Activated T-helper 2 cell treated with anti-CD3 and anti-CD28 coated beads, Interferon-gamma antibody, Interleukin-2, Interleukin-4, amounts not matched to agents 10 μg/mL and 5 μg/mL and 100 μg/mL, durations not matched to agents 14 hours and 24 hours and 36 hours (primary cell): ENCODE measurements at regions of chr3 and their contacts with region 1.

Region 1: DNA sequence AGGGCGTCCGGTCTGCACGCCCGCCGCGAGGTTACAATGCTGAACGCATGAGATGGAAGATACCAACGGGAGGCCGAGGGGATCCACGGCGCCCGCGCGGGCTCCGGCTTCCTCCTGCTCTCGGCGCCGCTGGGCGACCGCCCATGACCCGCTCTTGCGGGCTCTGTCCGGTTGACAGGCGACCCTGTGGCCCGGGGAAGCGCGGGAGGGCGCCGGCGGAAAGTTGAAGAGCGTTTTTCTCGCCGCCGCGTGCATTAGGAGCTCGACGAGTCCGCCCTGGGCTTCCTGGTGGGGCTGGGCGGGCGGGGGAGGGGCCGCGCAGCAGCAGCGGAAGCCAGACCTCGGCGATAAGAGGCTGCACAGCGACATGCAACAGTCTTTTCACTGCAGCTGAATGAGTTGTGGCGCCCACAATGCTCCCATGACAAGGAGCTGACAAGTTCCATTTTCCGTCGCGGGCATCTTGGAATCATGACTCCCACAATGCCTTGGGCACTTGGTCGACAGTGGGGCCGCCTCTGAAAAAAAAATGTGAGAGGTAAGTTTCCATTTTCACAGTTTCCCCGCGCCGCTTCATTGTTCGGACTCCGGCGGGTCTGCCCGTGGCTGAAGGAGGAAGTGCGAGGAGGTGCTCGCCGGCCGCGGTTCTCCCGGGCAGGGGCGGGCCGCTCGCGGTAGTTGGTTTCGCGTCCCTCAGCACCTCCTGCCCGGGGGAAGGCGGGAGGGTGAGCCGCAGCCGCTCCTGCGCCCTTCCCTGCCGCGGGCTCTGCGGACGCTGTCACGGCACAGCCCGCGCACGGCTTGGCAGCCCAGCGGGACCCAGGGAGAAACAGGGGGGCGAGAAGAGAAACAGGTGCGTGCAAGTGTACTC is at the start of gene MBNL1:
- DNase-seq: peak; percentile 82
- H3K4me3 Mint-ChIP-seq: peak within 1 kb of the TSS; percentile 94
- H3K27ac Mint-ChIP-seq: peak within 1 kb of the TSS; percentile 96
- H3K4me1 Mint-ChIP-seq: peaks cover 54% of the 10 kb centered on the region
- H3K27me3 Mint-ChIP-seq: no peaks in the 10 kb centered on the region
- total RNA-seq, gene MBNL1: 230 and 244 TPM in 2 replicates

Region 2: GRCh38 chr3:151203051-151203420 is 1065.8 kb before region 1 on chr3 and contains the start of gene GPR171:
- intact Hi-C with region 1: loop called (anchors 5 kb)
- DNase-seq: peak; percentile 70
- H3K4me3 Mint-ChIP-seq: peak within 1 kb of the TSS; percentile 91
- H3K27ac Mint-ChIP-seq: peak within 1 kb of the TSS; percentile 95
- H3K4me1 Mint-ChIP-seq: peaks cover 52% of the 10 kb centered on the region
- H3K27me3 Mint-ChIP-seq: no peaks in the 10 kb centered on the region
- total RNA-seq, gene GPR171: 232 TPM in 2 replicates

Region 3: DNA sequence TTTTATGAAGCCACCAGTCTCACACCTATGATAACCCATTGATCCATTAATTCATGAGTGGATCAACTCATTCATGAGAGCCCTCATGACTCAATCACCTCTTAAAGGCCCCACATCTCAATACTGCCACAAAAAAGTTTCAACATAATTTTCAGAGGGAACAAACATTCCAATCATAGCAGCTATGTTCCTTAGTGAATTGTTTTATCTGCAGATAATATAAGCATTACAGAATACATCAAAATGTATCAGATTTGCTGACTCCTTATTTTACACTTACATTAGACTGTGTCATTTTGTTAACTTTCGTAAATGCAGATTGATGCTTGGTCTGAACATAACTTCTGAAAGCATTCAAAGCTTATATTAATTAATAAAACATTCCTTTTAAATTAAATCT is 155.4 kb before region 1 on chr3:
- intact Hi-C with region 1: no loop called
- DNase-seq: no peak
- H3K4me3 Mint-ChIP-seq: no peak overlapping the region
- H3K27ac Mint-ChIP-seq: no peak overlapping the region
- H3K4me1 Mint-ChIP-seq: no peaks in the 10 kb centered on the region
- H3K27me3 Mint-ChIP-seq: peaks cover 50% of the 10 kb centered on the region

Region 4: DNA sequence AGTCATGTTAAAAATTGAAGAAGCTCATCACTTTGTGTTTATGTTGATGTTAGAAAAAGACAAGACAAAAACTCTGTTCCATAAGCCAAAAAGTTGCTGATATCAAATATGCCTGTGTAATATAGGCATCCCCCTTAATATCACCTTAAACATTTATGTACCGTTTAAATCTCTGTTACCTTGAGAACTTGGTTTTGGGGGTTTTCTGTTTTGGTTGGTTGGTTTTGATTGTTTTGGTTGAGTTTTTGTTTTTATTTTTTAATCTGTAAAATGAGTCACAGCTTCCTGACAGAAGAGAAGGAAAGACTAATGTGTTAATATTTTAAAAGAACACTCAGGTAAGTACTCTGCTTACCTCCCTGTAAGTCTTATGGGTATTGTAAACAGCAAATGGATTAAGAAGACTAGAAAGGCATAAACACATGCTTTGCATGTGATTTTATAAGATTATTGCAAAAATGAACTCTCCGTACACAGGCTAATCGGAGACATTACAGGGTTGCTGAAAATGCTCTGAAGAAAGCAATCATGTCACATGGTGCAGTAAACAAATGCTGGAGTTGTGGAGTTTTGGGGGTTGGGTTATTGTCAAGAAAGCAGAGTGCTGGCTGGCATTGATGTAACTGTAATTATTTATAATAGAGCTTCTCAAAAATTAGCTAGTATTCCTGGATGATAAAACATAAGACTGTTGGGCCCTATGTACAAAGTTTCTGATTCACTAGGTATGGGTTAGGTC is 69.5 kb before region 1 on chr3:
- intact Hi-C with region 1: loop called (anchors 1 kb)
- DNase-seq: no peak
- H3K4me3 Mint-ChIP-seq: peak overlapping the region; percentile 74
- H3K27ac Mint-ChIP-seq: peak overlapping the region; percentile 98
- H3K4me1 Mint-ChIP-seq: peaks cover 73% of the 10 kb centered on the region
- H3K27me3 Mint-ChIP-seq: no peaks in the 10 kb centered on the region

Region 5: GRCh38 chr3:152241142-152242017 is 27.4 kb before region 1 on chr3:
- intact Hi-C with region 1: loop called (anchors 1 kb)
- DNase-seq: no peak
- H3K4me3 Mint-ChIP-seq: peak overlapping the region; percentile 66
- H3K27ac Mint-ChIP-seq: peak overlapping the region; percentile 77
- H3K4me1 Mint-ChIP-seq: peaks cover 54% of the 10 kb centered on the region
- H3K27me3 Mint-ChIP-seq: no peaks in the 10 kb centered on the region

Region 6: DNA sequence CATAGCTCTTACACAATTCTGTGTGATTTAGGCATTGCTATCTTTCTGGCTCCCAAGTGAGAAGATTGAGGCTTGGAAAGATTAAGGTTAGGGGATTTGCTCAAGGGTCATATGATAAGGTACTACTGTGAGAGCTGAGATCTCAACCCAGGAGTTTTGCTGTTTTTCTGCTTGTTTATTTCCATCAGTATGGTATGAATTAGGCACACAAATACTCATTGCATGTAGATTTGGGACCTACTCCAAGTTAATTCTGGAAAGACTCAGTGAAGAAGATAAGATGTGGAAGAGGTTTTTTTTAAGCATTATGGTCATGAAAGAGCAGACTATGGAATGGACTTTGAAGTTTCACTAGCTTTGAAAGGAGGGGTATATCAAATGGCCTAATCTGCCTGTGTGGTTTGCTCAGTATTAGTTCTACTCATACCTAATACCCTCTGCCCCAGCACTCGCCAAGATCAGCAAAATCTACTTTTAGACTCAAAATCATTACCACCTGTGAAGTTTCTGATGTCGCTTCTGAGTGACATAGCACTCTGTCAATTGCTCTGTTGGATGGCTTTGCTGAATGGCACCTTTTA is 12.4 kb after region 1 on chr3:
- intact Hi-C with region 1: loop called (anchors 1 kb)
- DNase-seq: no peak
- H3K4me3 Mint-ChIP-seq: no peak overlapping the region
- H3K27ac Mint-ChIP-seq: peak overlapping the region; percentile 78
- H3K4me1 Mint-ChIP-seq: peaks cover 71% of the 10 kb centered on the region
- H3K27me3 Mint-ChIP-seq: no peaks in the 10 kb centered on the region

Region 7: GRCh38 chr3:152319831-152320617 is 51.2 kb after region 1 on chr3:
- intact Hi-C with region 1: no loop called
- DNase-seq: no peak
- H3K4me3 Mint-ChIP-seq: no peak overlapping the region
- H3K27ac Mint-ChIP-seq: no peak overlapping the region
- H3K4me1 Mint-ChIP-seq: peaks cover 68% of the 10 kb centered on the region
- H3K27me3 Mint-ChIP-seq: no peaks in the 10 kb centered on the region

Region 8: DNA sequence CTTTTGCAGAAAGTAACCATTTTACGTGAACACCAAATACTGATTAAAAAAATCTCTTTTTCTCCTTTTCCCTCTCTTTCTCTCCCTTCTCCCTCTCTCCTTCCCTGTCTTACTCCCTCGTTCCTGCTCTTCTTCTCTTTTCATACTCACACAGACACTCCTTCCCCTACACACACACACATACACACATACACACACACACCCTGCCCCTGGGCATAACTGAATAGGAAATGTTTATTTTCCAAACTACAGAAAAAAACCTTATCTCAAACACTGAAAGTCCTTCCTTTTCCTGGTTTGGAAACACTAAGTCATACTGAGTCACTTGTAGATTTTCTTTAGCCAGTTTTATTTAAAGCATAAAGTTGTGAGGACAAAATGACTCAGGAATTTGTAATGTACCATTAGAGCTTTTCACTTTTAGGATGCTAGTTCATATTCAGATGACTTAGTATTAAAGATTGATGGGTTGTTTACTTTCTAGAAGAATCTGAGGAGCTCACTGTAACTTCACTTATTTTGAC is 62.3 kb after region 1 on chr3:
- intact Hi-C with region 1: loop called (anchors 2 kb)
- DNase-seq: no peak
- H3K4me3 Mint-ChIP-seq: peak overlapping the region; percentile 0
- H3K27ac Mint-ChIP-seq: peak overlapping the region; percentile 78
- H3K4me1 Mint-ChIP-seq: peaks cover 63% of the 10 kb centered on the region
- H3K27me3 Mint-ChIP-seq: no peaks in the 10 kb centered on the region

Region 9: DNA sequence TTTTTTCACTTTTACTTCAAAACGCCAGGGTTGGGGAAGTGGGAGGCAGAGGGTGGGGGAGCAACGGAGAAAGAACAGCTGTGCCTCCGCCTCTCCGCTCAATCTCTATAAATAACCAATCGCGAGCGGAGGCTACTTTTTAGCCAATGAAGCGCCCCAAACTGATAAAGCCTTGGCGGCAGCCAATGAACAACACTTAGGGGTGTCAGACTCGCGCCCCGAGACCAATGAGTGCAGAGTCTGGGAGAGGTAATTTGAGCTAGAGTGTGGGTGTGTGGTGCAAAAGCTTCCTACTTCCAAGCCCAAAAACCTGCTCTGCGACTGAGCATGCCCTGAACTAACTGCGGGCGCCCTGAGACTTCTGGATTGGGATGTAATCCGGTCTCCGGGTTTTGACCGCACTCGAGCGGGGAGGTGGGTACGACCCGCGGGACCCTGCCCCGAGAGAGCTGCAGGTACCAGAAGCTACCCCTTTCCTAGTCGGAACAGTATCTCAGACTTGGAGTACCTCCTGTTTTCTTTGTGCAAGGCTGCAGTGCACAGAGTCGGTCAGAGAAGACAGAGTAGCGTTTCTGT is 892.4 kb after region 1 on chr3:
- intact Hi-C with region 1: loop called (anchors 5 kb)
- DNase-seq: peak; percentile 93
- H3K4me3 Mint-ChIP-seq: peak overlapping the region; percentile 94
- H3K27ac Mint-ChIP-seq: peak overlapping the region; percentile 97
- H3K4me1 Mint-ChIP-seq: peaks cover 31% of the 10 kb centered on the region
- H3K27me3 Mint-ChIP-seq: no peaks in the 10 kb centered on the region